A549 (cell line): ENCODE measurements at regions of chr1 and their contacts with region 1.

Region 1: DNA sequence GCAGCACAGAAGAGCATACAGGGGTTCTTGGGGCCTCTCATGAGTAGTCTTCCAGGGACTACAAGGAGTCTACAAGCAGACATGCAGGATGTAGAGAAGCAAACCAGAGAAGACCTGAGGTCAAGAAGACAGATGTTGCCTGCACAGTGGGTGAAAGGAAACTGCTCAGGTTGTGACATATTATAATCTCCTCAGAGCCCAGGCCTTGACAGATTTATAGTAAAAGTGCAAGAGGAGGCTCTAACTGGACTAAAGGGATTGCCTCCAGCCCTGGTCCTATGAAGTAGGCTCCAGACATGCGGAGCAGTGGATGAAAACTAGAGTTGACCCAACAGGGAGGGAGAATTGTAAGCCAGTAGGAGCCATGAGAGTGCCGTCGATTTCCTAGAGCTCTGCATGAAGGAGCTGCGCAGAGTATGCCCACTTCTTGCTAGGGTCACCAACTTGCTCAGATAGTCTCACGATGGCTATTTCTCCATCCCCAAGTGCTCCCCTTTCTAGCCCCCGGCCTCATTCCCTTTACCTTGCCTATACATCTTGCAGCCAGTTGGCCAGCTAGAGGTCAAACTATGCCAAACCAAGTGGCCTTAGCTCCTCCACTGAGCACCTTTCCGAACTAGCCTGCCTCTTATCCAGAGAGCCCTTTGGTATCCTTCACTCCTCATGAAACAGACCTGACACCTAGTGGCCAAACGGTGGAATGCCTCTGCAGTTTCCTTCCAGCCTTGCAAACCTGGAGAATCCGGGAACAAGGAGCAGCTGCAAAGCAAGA is 36.2 kb upstream of the IPO9 start:
- DNase-seq: peak; percentile 86 to 90
- ATAC-seq: peak; percentile 93 to 97
- H3K4me3 ChIP-seq: no peak overlapping the region
- H3K27ac ChIP-seq: peak overlapping the region in 1 of 2 experiments; percentile 61; a peak in 3 of 6 replicates
- H3K4me1 ChIP-seq: peaks cover 14% of the 10 kb centered on the region; the same call in 2 of the 3 replicates
- CTCF ChIP-seq: peak; percentile 97
- EP300 ChIP-seq: no peak
- POLR2A ChIP-seq: no peak
- RAD21 ChIP-seq: peak; percentile 99 to 100

Region 2: DNA sequence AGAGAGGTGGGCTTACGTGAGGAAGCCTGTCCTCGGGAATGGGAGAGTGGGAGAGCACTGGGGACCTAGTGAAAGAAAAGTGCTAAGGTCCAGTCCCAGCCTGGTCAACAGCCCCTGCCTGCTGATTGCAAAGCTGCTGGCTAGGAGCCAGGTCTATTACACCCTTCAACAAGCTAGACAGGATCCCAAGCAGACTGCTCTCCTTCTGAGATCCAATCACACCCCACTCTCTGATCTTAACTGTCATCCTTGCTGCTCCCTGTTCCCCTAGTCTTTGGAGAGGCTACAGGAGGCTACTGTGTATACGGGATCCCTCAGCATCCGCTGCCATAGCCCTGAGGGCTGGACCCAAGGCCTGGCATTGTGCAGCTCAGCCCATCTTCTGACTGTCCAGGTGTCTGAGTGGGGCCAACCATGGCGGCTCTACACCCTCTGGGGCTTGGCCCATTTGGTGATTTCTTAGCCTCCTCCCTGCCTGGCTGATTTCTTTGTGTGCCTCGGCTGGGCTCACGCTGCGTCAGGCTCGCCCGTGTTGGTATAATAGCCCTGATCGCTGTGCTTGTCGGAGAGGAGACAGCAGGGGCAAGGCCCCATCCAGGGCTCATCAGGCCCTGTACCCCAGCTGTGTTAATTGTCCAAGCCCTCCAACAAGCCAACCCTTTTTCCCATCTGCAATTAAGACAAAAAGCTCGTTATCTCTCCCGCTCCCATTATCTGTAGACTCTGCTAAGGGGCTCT is 209.8 kb before region 1 on chr1:
- CTCF ChIA-PET with region 1: interaction called, 14 read pairs
- POLR2A ChIA-PET with region 1: no interaction called
- DNase-seq: no peak
- ATAC-seq: peak; percentile 45 to 51; a peak in 3 of 6 replicates
- H3K4me3 ChIP-seq: no peak overlapping the region
- H3K27ac ChIP-seq: peak overlapping the region; percentile 23 to 73; a peak in 4 of 6 replicates
- H3K4me1 ChIP-seq: peaks cover 37% of the 10 kb centered on the region
- CTCF ChIP-seq: no peak
- EP300 ChIP-seq: no peak
- POLR2A ChIP-seq: no peak
- RAD21 ChIP-seq: no peak

Region 3: GRCh38 chr1:201619513-201619912 is 173.2 kb before region 1 on chr1:
- CTCF ChIA-PET with region 1: interaction called, 14 read pairs
- POLR2A ChIA-PET with region 1: no interaction called
- DNase-seq: no peak
- ATAC-seq: peak in 1 of 2 experiments; percentile 62; a peak in 3 of 6 replicates
- H3K4me3 ChIP-seq: no peak overlapping the region
- H3K27ac ChIP-seq: peak overlapping the region; percentile 31 to 63; a peak in 3 of 6 replicates
- H3K4me1 ChIP-seq: peaks cover 29% of the 10 kb centered on the region
- CTCF ChIP-seq: no peak
- EP300 ChIP-seq: no peak
- POLR2A ChIP-seq: no peak
- RAD21 ChIP-seq: no peak

Region 4: GRCh38 chr1:201709564-201710295 is 83.0 kb before region 1 on chr1:
- CTCF ChIA-PET with region 1: interaction called, 903 read pairs
- POLR2A ChIA-PET with region 1: interaction called, 8 read pairs
- DNase-seq: peak; percentile 54 to 82
- ATAC-seq: peak; percentile 62 to 80; a peak in 4 of 6 replicates
- H3K4me3 ChIP-seq: no peak overlapping the region
- H3K27ac ChIP-seq: peak overlapping the region; percentile 59 to 95
- H3K4me1 ChIP-seq: peaks cover 43% of the 10 kb centered on the region
- CTCF ChIP-seq: peak; percentile 92
- EP300 ChIP-seq: no peak
- POLR2A ChIP-seq: no peak
- RAD21 ChIP-seq: peak; percentile 95 to 97

Region 5: GRCh38 chr1:201759194-201759815 is 33.4 kb before region 1 on chr1:
- CTCF ChIA-PET with region 1: interaction called, 12 read pairs
- POLR2A ChIA-PET with region 1: no interaction called
- DNase-seq: no peak
- ATAC-seq: 0 out of 6 replicates have a peak, but pooled peaks of 1 of the 2 experiments have one; percentile 32
- H3K4me3 ChIP-seq: no peak overlapping the region
- H3K27ac ChIP-seq: no peak overlapping the region
- H3K4me1 ChIP-seq: peaks cover 34% of the 10 kb centered on the region; the same call in 2 of the 3 replicates
- CTCF ChIP-seq: no peak
- EP300 ChIP-seq: no peak
- POLR2A ChIP-seq: no peak
- RAD21 ChIP-seq: no peak

Region 6: GRCh38 chr1:201818971-201819750 is 26.4 kb after region 1 on chr1:
- CTCF ChIA-PET with region 1: interaction called, 27 read pairs
- POLR2A ChIA-PET with region 1: no interaction called
- DNase-seq: no peak
- ATAC-seq: no peak
- H3K4me3 ChIP-seq: no peak overlapping the region
- H3K27ac ChIP-seq: no peak overlapping the region
- H3K4me1 ChIP-seq: no peaks in the 10 kb centered on the region
- CTCF ChIP-seq: no peak
- EP300 ChIP-seq: no peak
- POLR2A ChIP-seq: no peak
- RAD21 ChIP-seq: no peak